ENCODE measurements at regions of chr9 and their contacts with region 1.

Region 1: DNA sequence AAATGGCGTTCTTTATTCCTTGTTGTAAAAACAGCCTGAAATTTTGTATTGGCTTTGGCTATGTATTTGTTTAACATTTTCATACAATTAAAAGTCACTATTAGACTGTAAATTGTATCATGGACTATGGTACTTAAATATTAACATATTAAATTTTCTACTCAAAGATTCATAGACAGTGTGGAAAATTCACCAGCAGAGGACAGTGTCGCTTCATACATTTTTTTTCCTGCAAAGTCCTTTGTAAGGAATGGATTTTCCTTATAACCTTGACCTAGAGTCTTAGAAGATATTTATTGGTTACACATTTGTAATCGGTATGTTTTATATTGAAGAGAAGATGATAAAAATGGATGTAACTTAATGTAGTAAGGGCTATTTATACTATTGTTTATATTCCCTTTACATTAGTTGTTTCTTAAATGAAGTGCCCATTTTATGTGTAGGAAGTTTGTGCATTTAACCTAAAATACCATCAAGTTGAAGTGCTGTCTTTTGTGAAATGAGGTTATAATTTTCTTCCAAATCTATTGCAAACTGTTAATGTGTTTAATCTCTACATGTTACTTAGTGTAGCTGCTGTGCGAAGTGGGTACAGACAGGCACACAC is 150.1 kb downstream of the KDM4C start:
- DNase-seq: peak in 1 of 2 experiments; percentile 31
- H3K4me3 ChIP-seq: no peak overlapping the region
- H3K4me3 Mint-ChIP-seq: no peak overlapping the region
- H3K27ac Mint-ChIP-seq: no peak overlapping the region
- H3K4me1 ChIP-seq: peaks cover 8% of the 10 kb centered on the region; the same call in 1 of the 2 replicates
- H3K4me1 Mint-ChIP-seq: peaks cover 6% of the 10 kb centered on the region
- H3K27me3 ChIP-seq: no peaks in the 10 kb centered on the region
- H3K27me3 Mint-ChIP-seq: no peaks in the 10 kb centered on the region
- CTCF ChIP-seq: peak; percentile 59 to 61

Region 2: GRCh38 chr9:7055201-7055903 is 147.5 kb after region 1 on chr9:
- CTCF ChIA-PET with region 1: no interaction called
- POLR2A ChIA-PET with region 1: no interaction called
- intact Hi-C with region 1: loop called (anchors 5 kb)
- DNase-seq: no peak
- H3K4me3 ChIP-seq: no peak overlapping the region
- H3K4me3 Mint-ChIP-seq: no peak overlapping the region
- H3K27ac Mint-ChIP-seq: no peak overlapping the region
- H3K4me1 ChIP-seq: no peaks in the 10 kb centered on the region
- H3K4me1 Mint-ChIP-seq: no peaks in the 10 kb centered on the region
- H3K27me3 ChIP-seq: no peaks in the 10 kb centered on the region
- H3K27me3 Mint-ChIP-seq: no peaks in the 10 kb centered on the region
- CTCF ChIP-seq: no peak

Measured in Caco-2 (cell line).